Calu3 (cell line): ENCODE measurements at regions of chr7 and their contacts with region 1.

Region 1: DNA sequence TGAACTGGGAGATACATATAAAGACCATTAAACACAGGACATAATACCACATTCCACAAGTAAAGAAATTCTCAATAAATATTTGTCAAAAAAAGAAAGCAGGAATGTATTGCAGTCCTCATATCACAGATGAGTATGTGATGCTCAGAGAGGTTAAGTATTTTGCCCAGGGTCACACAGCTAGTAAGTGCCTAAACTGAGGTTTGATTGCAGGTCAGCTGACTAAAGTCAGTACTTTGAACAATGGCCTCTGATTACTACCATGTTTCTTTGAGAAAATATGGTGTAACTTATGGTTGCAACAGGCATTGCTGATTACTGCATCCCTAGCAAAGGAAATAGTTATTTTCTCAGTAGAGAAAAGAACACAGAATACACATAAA is 267.1 kb downstream of the ELMO1 start:
- DNase-seq: no peak
- H3K4me3 Mint-ChIP-seq: no peak overlapping the region
- H3K27ac Mint-ChIP-seq: no peak overlapping the region
- H3K4me1 Mint-ChIP-seq: no peaks in the 10 kb centered on the region
- H3K27me3 Mint-ChIP-seq: no peaks in the 10 kb centered on the region
- CTCF ChIP-seq: no peak

Region 2: DNA sequence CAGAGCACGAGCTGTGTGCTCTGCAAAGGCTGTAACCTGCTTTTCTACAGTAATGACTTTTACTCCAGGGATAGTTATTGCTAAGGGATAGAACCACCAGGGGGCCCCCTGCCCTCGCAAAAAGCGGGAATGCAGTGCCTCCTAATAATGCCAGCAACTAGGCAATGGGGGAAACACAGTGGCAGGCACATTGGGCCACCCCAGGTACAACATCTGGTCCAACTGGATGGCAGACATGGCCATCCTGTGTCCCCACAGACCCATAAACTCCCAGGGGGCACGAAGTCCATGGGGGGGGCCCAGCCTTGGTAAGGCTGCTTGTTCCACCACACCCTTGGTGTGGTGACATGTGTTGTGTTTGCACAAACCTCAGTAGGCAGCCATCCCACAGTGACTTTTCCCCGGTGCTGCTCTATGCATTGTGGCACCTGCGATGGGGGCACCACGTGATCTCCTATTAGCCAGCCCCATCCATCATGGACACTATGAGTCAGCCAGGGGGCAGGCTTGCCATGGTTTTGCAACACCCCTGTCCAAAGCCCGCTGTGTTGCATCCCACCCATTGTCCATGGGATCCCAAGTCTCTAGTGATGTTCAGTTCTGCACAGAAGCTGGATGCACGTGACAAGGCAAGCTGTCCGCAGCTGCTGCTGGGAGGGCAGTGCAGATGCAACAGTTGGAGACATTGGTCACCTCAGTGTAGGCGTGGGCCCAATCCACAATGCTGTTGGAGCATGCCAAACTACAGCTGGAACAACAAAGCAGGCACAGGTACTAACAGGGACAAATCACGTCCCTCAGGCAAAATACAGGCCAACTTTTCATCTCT is 707.9 kb before region 1 on chr7:
- CTCF ChIA-PET with region 1: interaction called, 7 read pairs
- intact Hi-C with region 1: loop called (anchors 1 kb)
- DNase-seq: peak; percentile 89
- H3K4me3 Mint-ChIP-seq: no peak overlapping the region
- H3K27ac Mint-ChIP-seq: peak overlapping the region; percentile 68
- H3K4me1 Mint-ChIP-seq: peaks cover 49% of the 10 kb centered on the region
- H3K27me3 Mint-ChIP-seq: no peaks in the 10 kb centered on the region
- CTCF ChIP-seq: peak; percentile 88

Region 3: DNA sequence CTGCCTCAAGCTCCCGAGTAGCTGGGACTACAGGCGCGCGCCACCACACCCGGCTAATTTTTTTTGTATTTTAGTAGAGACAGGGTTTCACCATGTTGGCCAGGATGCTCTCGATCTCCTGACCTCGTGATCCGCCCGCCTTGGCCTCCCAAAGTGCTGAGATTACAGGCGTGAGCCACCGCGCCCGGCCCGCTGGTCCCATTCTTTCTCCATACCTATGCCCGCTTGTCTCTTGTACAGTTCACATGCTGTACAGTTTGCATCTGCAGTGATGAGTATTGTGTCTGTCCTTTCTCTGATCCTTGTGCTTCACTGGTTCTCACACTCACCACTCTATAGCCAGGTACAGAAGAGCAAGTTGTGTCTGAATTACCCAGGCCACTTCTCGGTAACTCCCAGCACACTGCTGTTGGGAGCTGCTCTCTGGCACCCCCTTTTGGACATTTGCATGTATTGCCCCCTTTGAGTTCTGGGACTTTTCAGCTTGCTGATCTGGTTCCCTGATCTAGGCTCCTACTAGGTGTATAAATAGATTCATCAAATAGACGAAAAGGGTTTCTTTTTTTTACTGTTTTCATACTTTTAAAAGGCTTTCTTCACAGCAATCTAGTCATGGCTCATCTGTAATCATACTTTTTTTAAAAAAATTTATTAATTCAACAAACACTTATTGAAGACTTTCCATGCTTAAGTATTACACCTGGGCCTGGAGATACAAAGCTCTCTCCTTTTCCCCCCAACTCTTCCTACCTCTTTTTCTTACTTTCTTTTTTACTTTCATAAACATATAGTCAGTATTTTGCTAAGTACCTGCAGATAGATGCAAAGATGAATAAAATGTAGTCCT is 510.7 kb before region 1 on chr7:
- CTCF ChIA-PET with region 1: interaction called, 11 read pairs
- intact Hi-C with region 1: loop called (anchors 5 kb)
- DNase-seq: peak; percentile 83
- H3K4me3 Mint-ChIP-seq: no peak overlapping the region
- H3K27ac Mint-ChIP-seq: no peak overlapping the region
- H3K4me1 Mint-ChIP-seq: peaks cover 26% of the 10 kb centered on the region
- H3K27me3 Mint-ChIP-seq: no peaks in the 10 kb centered on the region
- CTCF ChIP-seq: peak; percentile 94

Region 4: GRCh38 chr7:36962367-36962766 is 219.2 kb before region 1 on chr7:
- CTCF ChIA-PET with region 1: interaction called, 99 read pairs
- intact Hi-C with region 1: loop called (anchors 1 kb)
- DNase-seq: peak; percentile 16
- H3K4me3 Mint-ChIP-seq: no peak overlapping the region
- H3K27ac Mint-ChIP-seq: no peak overlapping the region
- H3K4me1 Mint-ChIP-seq: peaks cover 41% of the 10 kb centered on the region
- H3K27me3 Mint-ChIP-seq: no peaks in the 10 kb centered on the region
- CTCF ChIP-seq: no peak

Region 5: GRCh38 chr7:36986429-36987362 is 194.8 kb before region 1 on chr7:
- CTCF ChIA-PET with region 1: interaction called, 63 read pairs
- intact Hi-C with region 1: loop called (anchors 1 kb)
- DNase-seq: peak; percentile 82
- H3K4me3 Mint-ChIP-seq: no peak overlapping the region
- H3K27ac Mint-ChIP-seq: no peak overlapping the region
- H3K4me1 Mint-ChIP-seq: peaks cover 8% of the 10 kb centered on the region
- H3K27me3 Mint-ChIP-seq: peaks cover 55% of the 10 kb centered on the region
- CTCF ChIP-seq: peak; percentile 94

Region 6: GRCh38 chr7:37201003-37201875 is 19.7 kb after region 1 on chr7:
- CTCF ChIA-PET with region 1: interaction called, 12 read pairs
- intact Hi-C with region 1: no loop called
- DNase-seq: peak; percentile 89
- H3K4me3 Mint-ChIP-seq: no peak overlapping the region
- H3K27ac Mint-ChIP-seq: no peak overlapping the region
- H3K4me1 Mint-ChIP-seq: peaks cover 5% of the 10 kb centered on the region
- H3K27me3 Mint-ChIP-seq: peaks cover 33% of the 10 kb centered on the region
- CTCF ChIP-seq: peak; percentile 88